Endothelial cell of umbilical vein (primary cell): ENCODE measurements at regions of chr14 and their contacts with region 1.

Region 1: DNA sequence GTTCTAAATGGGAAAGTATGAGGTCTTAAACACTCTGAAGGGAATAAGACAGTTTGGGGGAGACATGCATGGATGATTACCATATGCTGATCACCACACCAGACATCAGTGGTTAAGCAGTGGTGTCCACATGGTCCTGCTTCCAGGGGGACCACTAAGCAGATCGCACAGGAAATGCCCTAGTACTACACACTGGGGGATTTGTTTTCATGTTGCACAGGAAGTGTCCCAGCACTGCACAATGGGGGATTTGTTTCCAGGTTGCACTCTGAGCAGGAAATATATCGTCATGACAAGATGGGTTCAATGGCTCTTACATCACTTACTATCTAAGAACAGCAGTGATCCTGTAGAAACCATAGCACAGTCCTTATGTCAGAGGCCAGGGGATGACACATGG is 245.5 kb downstream of the BCL11B start:
- DNase-seq: no peak
- H3K4me3 ChIP-seq: no peak overlapping the region
- H3K27ac ChIP-seq: no peak overlapping the region
- H3K4me1 ChIP-seq: no peaks in the 10 kb centered on the region
- H3K27me3 ChIP-seq: no peaks in the 10 kb centered on the region
- CTCF ChIP-seq: no peak
- POLR2A ChIP-seq: no peak

Region 2: GRCh38 chr14:99119554-99120525 is 93.4 kb after region 1 on chr14:
- CTCF ChIA-PET with region 1: no interaction called
- POLR2A ChIA-PET with region 1: interaction called, 12 read pairs
- dilution Hi-C with region 1: no loop called
- intact Hi-C with region 1: no loop called
- DNase-seq: no peak
- H3K4me3 ChIP-seq: no peak overlapping the region
- H3K27ac ChIP-seq: no peak overlapping the region
- H3K4me1 ChIP-seq: no peaks in the 10 kb centered on the region
- H3K27me3 ChIP-seq: no peaks in the 10 kb centered on the region
- CTCF ChIP-seq: no peak
- POLR2A ChIP-seq: no peak